ENCODE measurements at regions of chr2 and their contacts with region 1.

Region 1: DNA sequence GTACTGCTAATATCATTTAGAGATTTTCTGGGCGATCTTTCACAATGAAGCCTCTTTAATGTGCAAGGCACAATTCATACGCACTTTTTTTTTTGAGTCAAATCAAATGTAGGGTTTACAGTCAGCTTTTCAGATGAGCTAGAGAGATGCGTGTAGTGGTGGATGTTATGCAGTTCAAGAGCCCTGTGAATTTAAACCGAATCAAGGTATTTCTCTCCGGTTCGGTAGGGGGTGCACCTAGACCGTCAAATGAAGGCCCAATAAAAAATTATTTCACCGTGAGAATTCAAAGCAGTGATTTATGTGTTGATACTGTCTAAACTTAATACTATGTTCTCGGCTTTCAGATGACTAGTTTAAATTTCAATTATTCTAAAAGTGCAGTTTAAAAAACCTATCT is 1.1 kb downstream of the PTH2R start:
- ATAC-seq: peak; percentile 44 to 78 (median 60)
- H3K4me3 ChIP-seq: peak overlapping the region in 1 of 5 donors; percentile 33
- H3K27ac ChIP-seq: no peak overlapping the region
- H3K4me1 ChIP-seq: peaks cover 0 to 3% of the 10 kb centered on the region in 2 donors

Region 2: DNA sequence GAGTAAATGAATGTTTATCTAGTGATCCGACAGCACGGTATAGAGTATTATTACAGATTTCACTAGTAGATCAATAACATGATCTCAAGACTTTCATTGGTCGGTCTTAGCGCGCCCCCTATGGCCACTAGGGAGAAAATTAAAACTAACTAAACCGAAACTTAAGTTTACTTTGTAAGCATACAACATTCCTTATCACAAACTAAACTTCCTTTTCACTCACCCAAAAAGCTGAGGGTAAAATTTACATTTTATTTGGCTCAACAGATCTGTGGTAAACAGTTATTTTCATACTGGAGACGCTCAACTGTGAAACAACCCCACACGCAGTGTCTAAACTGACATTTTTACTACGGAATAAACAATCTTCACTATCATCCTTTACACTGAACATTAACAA is 800.5 kb after region 1 on chr2:
- in situ Hi-C with region 1: loop called in 2 of 9 experiments (anchors 25 kb)
- ATAC-seq: peak in 2 of 8 experiments; percentile 49
- H3K4me3 ChIP-seq: no peak overlapping the region
- H3K27ac ChIP-seq: no peak overlapping the region
- H3K4me1 ChIP-seq: no peaks in the 10 kb centered on the region

Region 3: GRCh38 chr2:209334198-209335017 is 926.7 kb after region 1 on chr2:
- in situ Hi-C with region 1: loop called in 1 of 9 experiments (anchors 25 kb)
- ATAC-seq: peak; percentile 49 to 80 (median 62)
- H3K4me3 ChIP-seq: no peak overlapping the region
- H3K27ac ChIP-seq: no peak overlapping the region
- H3K4me1 ChIP-seq: peaks cover 0 to 2% of the 10 kb centered on the region in 2 donors

Region 4: GRCh38 chr2:209380293-209380692 is 972.6 kb after region 1 on chr2:
- in situ Hi-C with region 1: no loop called
- ATAC-seq: no peak
- H3K4me3 ChIP-seq: no peak overlapping the region
- H3K27ac ChIP-seq: no peak overlapping the region
- H3K4me1 ChIP-seq: no peaks in the 10 kb centered on the region

Region 5: DNA sequence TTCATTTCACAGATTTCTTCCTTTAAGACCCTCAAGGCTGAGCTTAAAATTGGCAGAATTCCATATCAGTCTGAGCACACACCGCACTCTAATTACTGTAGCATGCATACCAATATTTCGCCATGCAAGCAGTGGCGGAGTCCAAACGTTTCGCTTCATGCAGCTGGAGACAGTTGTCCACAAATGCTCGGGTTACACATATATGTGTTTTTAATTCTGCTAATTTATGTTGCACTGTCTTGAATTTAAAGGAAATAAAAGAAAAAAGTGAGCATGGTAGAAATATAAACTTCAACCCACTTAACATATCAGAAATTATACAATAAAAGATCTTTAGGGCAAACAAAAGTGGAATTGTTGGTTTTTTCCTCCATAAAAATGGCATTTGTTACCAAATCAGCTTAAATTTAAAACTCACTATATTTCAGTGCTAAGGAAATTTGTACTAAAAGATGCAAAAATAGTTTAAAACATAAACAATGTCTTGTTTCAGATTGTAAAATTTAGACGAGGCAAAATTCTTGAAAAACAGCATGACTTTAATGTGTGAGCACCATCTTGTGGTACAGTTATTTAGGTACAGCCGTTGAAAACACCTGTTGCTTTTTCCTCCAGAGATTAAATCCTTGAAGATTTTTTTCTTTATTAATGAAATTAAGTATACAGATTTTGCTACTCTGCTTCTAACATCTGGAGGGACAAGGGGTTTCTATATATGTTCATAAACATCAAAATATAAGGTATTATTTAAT is 1787.6 kb after region 1 on chr2:
- in situ Hi-C with region 1: loop called in 2 of 9 experiments (anchors 25 kb)
- ATAC-seq: peak in 2 of 8 experiments; percentile 51 to 54
- H3K4me3 ChIP-seq: no peak overlapping the region
- H3K27ac ChIP-seq: no peak overlapping the region
- H3K4me1 ChIP-seq: no peaks in the 10 kb centered on the region

Region 6: DNA sequence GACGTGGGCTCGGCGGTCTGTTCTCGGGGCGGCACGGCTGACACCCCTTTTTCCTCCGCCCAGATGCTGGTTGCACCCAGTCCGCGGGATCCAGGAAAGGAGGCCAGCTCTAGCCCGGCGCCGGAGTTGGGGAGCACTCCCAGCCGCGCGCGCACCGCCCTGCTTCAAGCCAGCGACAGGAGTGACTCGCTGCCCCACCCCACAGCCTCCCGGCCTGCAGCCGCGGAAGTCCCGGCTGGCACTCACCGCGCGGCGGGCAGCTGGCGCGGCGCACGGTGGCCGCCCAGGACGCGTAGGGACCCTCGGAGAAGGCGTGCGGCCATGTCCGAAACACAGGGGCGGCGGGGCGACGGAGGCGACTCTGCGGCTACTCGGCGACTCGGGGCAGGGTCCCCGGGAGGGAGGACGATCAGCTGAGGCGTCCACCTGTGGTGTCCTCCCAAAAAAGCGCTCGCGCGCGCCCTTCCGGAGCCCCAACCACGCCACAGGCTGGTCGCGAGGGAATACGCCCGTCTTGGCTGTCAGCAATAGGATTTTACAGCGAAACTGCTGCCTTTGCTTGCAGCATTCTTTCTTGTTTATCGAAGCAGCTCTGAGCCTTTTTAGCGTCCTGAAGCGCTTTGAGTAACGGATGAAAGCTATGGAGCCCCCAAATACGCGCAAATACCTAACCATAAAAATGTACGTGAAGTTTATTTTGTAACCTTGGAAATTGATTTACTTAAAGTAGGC is 1817.4 kb after region 1 on chr2 and contains the start of gene ACADL:
- in situ Hi-C with region 1: loop called in 1 of 9 experiments (anchors 25 kb)
- ATAC-seq: peak; percentile 94 to 98 (median 96)
- H3K4me3 ChIP-seq: peak within 1 kb of the TSS; percentile 46 to 74 (median 58)
- H3K27ac ChIP-seq: no peak within 1 kb of the TSS
- H3K4me1 ChIP-seq: no peaks in the 10 kb centered on the region
- total RNA-seq, gene ACADL: 0.08 to 1.4 (median 0.41) TPM in 6 of 8 experiments, not detected in the others